MCF 10A (cell line): ENCODE measurements at regions of chr20 and their contacts with region 1.

Region 1: GRCh38 chr20:50478162-50479036 is 31.8 kb upstream of the PTPN1 start:
- DNase-seq: peak; percentile 79
- H3K4me3 Mint-ChIP-seq: no peak overlapping the region
- H3K27ac Mint-ChIP-seq: no peak overlapping the region
- H3K4me1 Mint-ChIP-seq: peaks cover 7% of the 10 kb centered on the region
- H3K27me3 Mint-ChIP-seq: no peaks in the 10 kb centered on the region
- CTCF ChIP-seq: peak; percentile 71

Region 2: GRCh38 chr20:50575847-50576720 is 97.7 kb after region 1 on chr20:
- CTCF ChIA-PET with region 1: interaction called, 36 read pairs
- POLR2A ChIA-PET with region 1: interaction called, 8 read pairs
- intact Hi-C with region 1: no loop called
- DNase-seq: peak; percentile 63
- H3K4me3 Mint-ChIP-seq: no peak overlapping the region
- H3K27ac Mint-ChIP-seq: no peak overlapping the region
- H3K4me1 Mint-ChIP-seq: peaks cover 21% of the 10 kb centered on the region
- H3K27me3 Mint-ChIP-seq: no peaks in the 10 kb centered on the region
- CTCF ChIP-seq: peak; percentile 56